Activated CD4-positive, alpha-beta memory T cell treated with anti-CD3 and anti-CD28 coated beads for 36 hours (primary cell): ENCODE measurements at regions of chr11 and their contacts with region 1.

Region 1: GRCh38 chr11:4060182-4060923 is 34.2 kb upstream of the RRM1 start:
- DNase-seq: no peak
- H3K4me3 Mint-ChIP-seq: no peak overlapping the region
- H3K27ac Mint-ChIP-seq: no peak overlapping the region
- H3K4me1 Mint-ChIP-seq: peaks cover 44% of the 10 kb centered on the region
- H3K27me3 Mint-ChIP-seq: no peaks in the 10 kb centered on the region

Region 2: DNA sequence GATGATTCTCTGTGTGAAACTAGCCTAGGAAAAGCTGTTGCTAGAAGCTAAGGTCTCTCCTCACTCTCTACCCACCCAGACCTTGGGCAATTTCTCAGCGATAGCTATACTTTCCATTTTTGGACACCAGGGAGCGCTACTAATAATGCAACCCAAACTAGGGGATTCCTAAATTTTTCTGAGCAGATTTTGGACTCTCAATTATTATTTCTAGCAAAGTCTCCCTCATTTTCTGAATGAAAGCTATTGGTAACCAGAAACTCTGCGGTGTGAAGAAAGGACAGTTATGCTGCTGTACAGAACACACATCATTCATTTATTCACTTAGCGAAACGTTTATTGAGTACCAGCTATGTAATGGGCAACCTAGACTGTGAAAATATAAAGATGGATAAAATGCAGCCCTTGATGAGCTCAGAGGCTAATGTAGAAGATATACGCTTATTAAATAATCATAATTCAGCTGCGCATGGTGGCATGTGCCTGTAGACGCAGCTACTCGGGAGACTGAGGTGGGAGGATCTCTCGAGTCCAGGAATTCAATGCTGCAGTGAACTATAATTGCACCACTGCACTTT is 211.0 kb before region 1 on chr11:
- CTCF ChIA-PET with region 1: interaction called, 756 read pairs
- POLR2A ChIA-PET with region 1: interaction called, 14 read pairs
- intact Hi-C with region 1: loop called (anchors 1 kb)
- DNase-seq: peak; percentile 42
- H3K4me3 Mint-ChIP-seq: no peak overlapping the region
- H3K27ac Mint-ChIP-seq: peak overlapping the region; percentile 34
- H3K4me1 Mint-ChIP-seq: peaks cover 37% of the 10 kb centered on the region
- H3K27me3 Mint-ChIP-seq: no peaks in the 10 kb centered on the region

Region 3: DNA sequence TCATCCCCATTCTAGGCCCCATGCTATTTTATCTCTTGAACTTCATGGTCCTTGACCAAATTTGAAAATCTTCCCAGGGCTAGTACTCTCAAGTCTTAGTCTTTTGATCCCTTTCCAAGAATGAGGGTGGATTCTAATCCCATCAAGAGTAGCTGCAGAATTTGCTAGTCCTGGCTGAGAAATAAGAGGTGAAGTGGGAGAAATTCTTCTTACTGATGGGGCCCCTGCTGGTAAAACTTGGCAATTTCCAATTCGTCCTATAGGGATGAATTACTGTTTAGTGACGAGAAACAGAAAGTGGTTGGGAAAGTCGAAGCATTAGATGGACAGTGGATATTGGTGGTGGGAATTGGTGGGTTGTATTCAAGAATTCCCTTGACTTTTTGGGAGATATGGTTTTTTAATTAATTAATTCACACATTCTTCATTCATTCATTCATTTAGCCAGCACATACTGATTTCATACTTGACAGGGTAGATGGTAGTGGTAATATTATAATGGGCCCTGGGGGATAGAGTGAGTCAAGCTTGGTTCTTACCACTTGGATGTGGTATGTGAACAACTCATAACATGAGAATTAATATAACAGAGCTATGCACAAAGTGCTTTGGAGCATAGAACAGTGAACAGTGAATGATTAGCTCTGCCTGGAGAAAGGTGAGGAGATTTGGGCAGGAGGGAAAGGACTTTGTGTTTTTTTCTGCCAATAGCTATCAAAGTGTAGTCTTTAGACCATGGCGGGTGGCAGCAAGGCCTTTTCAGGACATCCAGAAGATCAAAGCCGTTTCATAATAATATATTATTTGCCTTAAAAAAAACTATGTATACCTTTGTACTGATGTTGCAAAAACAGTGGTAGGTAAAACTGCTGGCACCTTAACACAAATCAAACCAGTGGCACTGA is 101.1 kb before region 1 on chr11:
- CTCF ChIA-PET with region 1: interaction called, 4 read pairs
- POLR2A ChIA-PET with region 1: no interaction called
- intact Hi-C with region 1: loop called (anchors 1 kb)
- DNase-seq: no peak
- H3K4me3 Mint-ChIP-seq: no peak overlapping the region
- H3K27ac Mint-ChIP-seq: peak overlapping the region; percentile 11
- H3K4me1 Mint-ChIP-seq: peaks cover 76% of the 10 kb centered on the region
- H3K27me3 Mint-ChIP-seq: no peaks in the 10 kb centered on the region

Region 4: GRCh38 chr11:3984896-3985295 is 75.5 kb before region 1 on chr11:
- CTCF ChIA-PET with region 1: no interaction called
- POLR2A ChIA-PET with region 1: no interaction called
- intact Hi-C with region 1: loop called (anchors 5 kb)
- DNase-seq: peak; percentile 69
- H3K4me3 Mint-ChIP-seq: no peak overlapping the region
- H3K27ac Mint-ChIP-seq: peak overlapping the region; percentile 18
- H3K4me1 Mint-ChIP-seq: peaks cover 73% of the 10 kb centered on the region
- H3K27me3 Mint-ChIP-seq: no peaks in the 10 kb centered on the region

Region 5: DNA sequence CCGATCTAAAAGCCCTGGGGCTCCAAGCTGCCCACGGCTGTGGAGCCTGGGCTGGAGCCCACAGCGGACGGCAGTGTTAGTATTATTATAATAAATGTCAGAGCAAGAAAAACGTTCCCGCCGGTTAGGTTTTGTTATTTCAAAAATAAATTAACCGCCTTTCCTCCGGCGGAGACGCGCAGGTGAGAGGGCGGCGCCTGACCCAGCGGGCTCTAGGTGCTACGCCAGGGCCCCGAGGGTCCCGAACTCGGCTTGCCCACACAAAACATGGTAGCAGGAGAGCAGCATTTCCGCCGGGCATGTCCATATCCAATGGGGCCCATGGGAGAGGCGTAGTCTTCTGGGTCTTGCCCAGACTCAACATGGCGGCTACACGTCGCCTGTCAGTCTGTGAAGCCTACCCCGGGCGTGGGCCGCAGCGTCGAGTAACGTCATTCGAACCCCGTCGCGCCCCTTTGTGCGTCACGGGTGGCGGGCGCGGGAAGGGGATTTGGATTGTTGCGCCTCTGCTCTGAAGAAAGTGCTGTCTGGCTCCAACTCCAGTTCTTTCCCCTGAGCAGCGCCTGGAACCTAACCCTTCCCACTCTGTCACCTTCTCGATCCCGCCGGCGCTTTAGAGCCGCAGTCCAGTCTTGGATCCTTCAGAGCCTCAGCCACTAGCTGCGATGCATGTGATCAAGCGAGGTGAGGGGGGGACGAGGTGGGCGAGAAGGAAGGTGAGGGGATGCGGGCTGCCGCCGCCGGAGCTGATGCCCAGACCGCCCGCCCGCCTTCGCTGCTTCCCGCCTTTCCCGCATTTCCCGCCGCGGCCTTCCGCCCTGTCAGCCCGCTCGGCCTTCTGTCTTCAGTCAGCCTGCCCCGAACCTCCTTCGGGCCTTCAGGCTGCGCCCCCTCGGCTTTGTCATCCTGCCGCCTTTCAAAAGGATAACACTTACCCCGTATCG is 34.3 kb after region 1 on chr11 and contains the start of gene RRM1:
- CTCF ChIA-PET with region 1: no interaction called
- POLR2A ChIA-PET with region 1: no interaction called
- intact Hi-C with region 1: loop called (anchors 1 kb)
- DNase-seq: peak; percentile 97
- H3K4me3 Mint-ChIP-seq: peak within 1 kb of the TSS; percentile 95
- H3K27ac Mint-ChIP-seq: peak within 1 kb of the TSS; percentile 92
- H3K4me1 Mint-ChIP-seq: peaks cover 71% of the 10 kb centered on the region
- H3K27me3 Mint-ChIP-seq: no peaks in the 10 kb centered on the region
- total RNA-seq, gene RRM1: 201 to 203 TPM

Region 6: DNA sequence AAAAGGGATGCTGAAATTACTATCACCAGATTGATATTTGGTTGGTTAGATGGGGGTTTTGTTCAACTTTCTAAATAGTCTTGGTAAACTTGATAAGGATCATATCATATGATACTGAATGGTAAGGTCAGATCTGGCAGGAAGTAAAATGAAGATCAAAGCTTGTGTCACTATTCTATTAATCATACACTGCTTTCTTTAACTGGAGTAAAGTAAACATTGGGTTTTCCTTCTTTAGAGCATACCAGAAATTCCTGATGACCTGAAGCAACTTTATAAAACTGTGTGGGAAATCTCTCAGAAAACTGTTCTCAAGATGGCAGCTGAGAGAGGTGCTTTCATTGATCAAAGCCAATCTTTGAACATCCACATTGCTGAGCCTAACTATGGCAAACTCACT is 74.5 kb after region 1 on chr11:
- CTCF ChIA-PET with region 1: no interaction called
- POLR2A ChIA-PET with region 1: no interaction called
- intact Hi-C with region 1: no loop called
- DNase-seq: no peak
- H3K4me3 Mint-ChIP-seq: no peak overlapping the region
- H3K27ac Mint-ChIP-seq: no peak overlapping the region
- H3K4me1 Mint-ChIP-seq: no peaks in the 10 kb centered on the region
- H3K27me3 Mint-ChIP-seq: no peaks in the 10 kb centered on the region